Posterior cingulate gyrus (tissue), 11 donors: ENCODE measurements at regions of chr20 and their contacts with region 1.

Region 1: GRCh38 chr20:43590392-43591323 is at the start of gene IFT52:
- DNase-seq: peak; percentile 89 to 99 (median 92)

Region 2: GRCh38 chr20:43456809-43457639 is 133.6 kb before region 1 on chr20:
- intact Hi-C with region 1: loop called (anchors 2 kb)
- DNase-seq: peak; percentile 87 to 98 (median 93)

Region 3: GRCh38 chr20:43514062-43514999 is 76.3 kb before region 1 on chr20:
- intact Hi-C with region 1: loop called (anchors 2 kb)
- DNase-seq: peak; percentile 90 to 99 (median 94)

Region 4: DNA sequence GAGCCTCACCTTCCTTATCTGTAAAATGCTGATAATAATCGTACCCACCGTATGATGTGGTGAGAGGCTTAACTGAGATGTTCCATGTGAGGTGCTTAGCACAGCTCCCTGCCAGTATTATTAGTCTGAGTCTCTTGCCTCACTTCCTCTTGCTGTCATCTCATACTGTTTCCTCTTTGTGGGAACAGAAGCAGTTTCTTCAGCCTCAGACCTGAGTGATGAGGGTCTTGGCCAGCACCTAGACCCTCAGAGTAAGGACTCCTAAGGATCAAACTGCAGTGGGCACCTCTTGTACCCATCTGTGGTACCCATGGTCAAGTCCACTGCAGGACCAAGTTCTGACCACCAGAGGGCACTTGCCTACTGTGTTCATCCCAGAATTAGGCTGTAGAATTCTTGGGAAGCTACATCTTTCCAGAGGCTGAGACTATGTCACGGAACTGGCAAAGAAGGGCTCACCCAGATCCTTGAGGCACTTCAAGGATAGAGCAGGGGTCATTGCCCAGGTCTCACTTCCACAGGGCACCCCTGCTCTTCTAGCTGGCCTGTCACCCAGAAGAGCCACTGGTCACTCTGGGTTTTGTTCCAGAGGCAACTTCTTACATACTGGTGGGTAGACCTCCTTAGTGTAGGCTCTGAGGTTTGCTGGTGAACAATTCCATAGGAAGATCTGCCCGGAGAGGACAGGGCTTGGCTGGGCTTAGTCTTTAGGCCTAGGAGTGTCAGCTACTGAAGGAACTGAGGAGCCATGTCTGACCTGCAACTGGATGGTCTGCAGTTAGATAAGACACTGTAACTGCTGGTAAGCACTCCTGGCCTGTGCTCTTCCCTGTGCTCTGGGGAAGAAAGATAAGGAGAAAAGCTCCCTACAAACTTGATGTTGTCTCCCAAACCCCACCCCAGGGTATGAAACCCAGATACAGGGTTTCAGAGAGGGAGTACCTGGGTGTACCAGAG is 52.5 kb before region 1 on chr20:
- intact Hi-C with region 1: loop called (anchors 2 kb)
- DNase-seq: peak; percentile 63 to 94 (median 84)

Region 5: DNA sequence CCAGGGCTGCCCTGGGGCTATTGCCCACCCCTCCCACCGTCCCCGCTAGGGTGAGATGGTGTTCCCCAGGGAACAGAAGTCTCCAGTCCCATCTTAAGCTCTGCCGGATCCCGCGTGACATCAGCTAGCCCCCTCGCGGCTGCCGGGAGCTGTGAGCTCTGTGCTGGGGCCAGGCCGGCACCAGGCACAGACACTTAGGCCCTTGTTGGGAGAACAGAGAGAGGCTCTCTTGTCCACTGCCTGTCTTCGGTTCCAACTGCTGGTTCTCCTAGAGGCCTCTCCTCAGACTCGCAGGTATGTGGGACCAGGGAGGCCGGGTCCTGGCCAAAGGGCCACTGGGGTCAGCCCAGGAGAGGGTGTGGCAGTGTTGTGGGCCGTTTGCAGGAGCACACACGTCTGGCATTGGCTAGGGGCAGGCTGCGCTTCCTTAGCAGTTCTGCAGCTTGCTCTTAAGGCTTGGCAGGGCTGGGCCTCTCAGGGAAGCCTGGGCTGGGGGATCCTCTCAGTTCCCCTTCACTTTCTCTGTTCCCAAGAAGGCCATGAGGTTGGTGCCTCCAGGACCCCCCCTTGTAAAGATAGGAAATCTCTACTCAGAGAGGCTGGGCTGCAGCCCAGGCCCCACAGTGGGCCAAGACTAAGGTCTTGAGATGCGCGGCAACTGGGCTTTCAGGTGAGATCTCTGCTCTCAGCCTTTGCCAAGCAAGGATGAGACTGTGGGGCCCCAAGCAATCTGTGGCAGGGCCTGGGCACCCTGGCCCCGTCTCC is 25.5 kb before region 1 on chr20:
- intact Hi-C with region 1: loop called (anchors 2 kb)
- DNase-seq: peak; percentile 42 to 96 (median 66)